ENCODE measurements at regions of chr11 and their contacts with region 1.

Region 1: GRCh38 chr11:22787551-22788162 is 41.9 kb downstream of the SVIP start:
- DNase-seq: no peak
- H3K4me3 ChIP-seq: no peak overlapping the region
- H3K27ac ChIP-seq: no peak overlapping the region
- H3K4me1 ChIP-seq: peaks cover 0 to 4% (median 0%) of the 10 kb centered on the region in 6 donors
- H3K27me3 ChIP-seq: no peaks in the 10 kb centered on the region
- CTCF ChIP-seq: peak; percentile 30 to 74 (median 51)
- POLR2A ChIP-seq: no peak

Region 2: DNA sequence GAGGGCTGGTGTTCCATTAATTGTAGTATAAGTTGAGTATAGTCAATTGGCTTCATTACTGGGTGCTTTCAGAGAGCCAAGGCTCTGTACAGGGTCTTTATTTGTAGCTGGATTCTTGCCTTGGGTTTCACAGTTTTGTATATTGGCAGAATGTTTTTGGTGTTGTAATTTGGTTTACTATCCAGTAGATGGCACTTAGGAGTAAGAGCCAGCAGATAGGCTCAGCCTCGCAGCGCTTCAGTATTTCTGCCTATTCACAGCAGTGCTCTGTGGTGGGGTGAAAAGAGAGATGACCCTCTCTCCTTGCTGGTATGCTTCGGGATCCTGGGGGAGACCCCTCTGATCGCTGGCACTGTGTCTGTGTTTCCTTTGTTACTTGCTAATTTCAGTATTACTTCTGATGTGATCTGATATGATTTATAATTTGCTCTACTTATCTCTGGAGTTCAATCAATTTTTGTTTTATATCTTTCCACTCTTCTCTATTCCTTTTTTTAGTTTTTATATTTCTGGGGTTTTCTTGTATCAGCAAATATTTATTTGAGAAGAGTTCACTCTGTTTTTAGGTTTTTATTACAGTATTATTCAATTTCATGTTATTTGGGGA is 542.6 kb before region 1 on chr11:
- intact Hi-C with region 1: loop called (anchors 10 kb)
- DNase-seq: no peak
- H3K4me3 ChIP-seq: no peak overlapping the region
- H3K27ac ChIP-seq: no peak overlapping the region
- H3K4me1 ChIP-seq: no peaks in the 10 kb centered on the region
- H3K27me3 ChIP-seq: peaks cover 0 to 7% (median 0%) of the 10 kb centered on the region in 7 donors
- CTCF ChIP-seq: peak in 9 of 11 experiments; percentile 30 to 61 (median 49)
- POLR2A ChIP-seq: no peak

Region 3: GRCh38 chr11:22331771-22332170 is 455.9 kb before region 1 on chr11:
- intact Hi-C with region 1: loop called (anchors 5 kb)
- DNase-seq: no peak
- H3K4me3 ChIP-seq: no peak overlapping the region
- H3K27ac ChIP-seq: no peak overlapping the region
- H3K4me1 ChIP-seq: no peaks in the 10 kb centered on the region
- H3K27me3 ChIP-seq: peaks cover 0 to 12% (median under 1%) of the 10 kb centered on the region in 7 donors
- CTCF ChIP-seq: no peak
- POLR2A ChIP-seq: no peak

Measured in spleen (tissue), 13 donors.